ENCODE measurements at regions of chr17 and their contacts with region 1.

Region 1: GRCh38 chr17:75904749-75905521 is at the start of gene MRPL38:
- DNase-seq: peak; percentile 96
- ATAC-seq: peak; percentile 99
- H3K4me3 Mint-ChIP-seq: peak within 1 kb of the TSS; percentile 94
- H3K27ac Mint-ChIP-seq: peak within 1 kb of the TSS; percentile 90
- H3K4me1 Mint-ChIP-seq: peaks cover 25% of the 10 kb centered on the region
- H3K27me3 Mint-ChIP-seq: no peaks in the 10 kb centered on the region
- total RNA-seq, gene MRPL38: 89.0 to 113 TPM

Region 2: GRCh38 chr17:75864448-75864871 is 40.5 kb before region 1 on chr17:
- CTCF ChIA-PET with region 1: no interaction called
- POLR2A ChIA-PET with region 1: no interaction called
- DNase-seq: peak; percentile 74
- ATAC-seq: peak; percentile 88
- H3K4me3 Mint-ChIP-seq: peak overlapping the region; percentile 39
- H3K27ac Mint-ChIP-seq: peak overlapping the region; percentile 83
- H3K4me1 Mint-ChIP-seq: peaks cover 29% of the 10 kb centered on the region
- H3K27me3 Mint-ChIP-seq: no peaks in the 10 kb centered on the region

Region 3: DNA sequence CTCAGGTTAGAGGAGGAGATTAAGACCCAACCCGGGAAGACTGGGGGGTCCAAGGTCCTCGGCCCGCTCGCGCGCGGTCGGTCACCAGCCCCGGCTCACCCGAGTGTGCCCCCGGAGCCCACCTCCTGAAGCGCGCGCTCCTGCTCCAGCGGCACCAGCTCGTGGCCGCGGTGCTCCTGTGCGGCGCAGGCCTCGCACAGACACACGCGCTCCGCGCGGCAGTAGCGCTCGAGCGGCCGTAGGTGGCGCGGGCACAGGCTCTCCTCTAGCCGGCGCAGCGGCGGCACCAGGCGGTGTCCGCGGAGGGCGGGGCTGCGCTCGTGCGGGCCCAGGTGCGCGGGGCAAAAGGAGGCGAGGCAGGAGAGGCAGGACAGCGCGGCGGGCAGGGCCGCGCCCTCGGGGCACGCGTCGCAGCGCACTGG is 27.2 kb before region 1 on chr17:
- CTCF ChIA-PET with region 1: interaction called, 16 read pairs
- POLR2A ChIA-PET with region 1: interaction called, 5 read pairs
- DNase-seq: peak; percentile 82
- ATAC-seq: peak; percentile 77
- H3K4me3 Mint-ChIP-seq: peak overlapping the region; percentile 91
- H3K27ac Mint-ChIP-seq: peak overlapping the region; percentile 92
- H3K4me1 Mint-ChIP-seq: peaks cover 54% of the 10 kb centered on the region
- H3K27me3 Mint-ChIP-seq: peaks cover 8% of the 10 kb centered on the region

Region 4: DNA sequence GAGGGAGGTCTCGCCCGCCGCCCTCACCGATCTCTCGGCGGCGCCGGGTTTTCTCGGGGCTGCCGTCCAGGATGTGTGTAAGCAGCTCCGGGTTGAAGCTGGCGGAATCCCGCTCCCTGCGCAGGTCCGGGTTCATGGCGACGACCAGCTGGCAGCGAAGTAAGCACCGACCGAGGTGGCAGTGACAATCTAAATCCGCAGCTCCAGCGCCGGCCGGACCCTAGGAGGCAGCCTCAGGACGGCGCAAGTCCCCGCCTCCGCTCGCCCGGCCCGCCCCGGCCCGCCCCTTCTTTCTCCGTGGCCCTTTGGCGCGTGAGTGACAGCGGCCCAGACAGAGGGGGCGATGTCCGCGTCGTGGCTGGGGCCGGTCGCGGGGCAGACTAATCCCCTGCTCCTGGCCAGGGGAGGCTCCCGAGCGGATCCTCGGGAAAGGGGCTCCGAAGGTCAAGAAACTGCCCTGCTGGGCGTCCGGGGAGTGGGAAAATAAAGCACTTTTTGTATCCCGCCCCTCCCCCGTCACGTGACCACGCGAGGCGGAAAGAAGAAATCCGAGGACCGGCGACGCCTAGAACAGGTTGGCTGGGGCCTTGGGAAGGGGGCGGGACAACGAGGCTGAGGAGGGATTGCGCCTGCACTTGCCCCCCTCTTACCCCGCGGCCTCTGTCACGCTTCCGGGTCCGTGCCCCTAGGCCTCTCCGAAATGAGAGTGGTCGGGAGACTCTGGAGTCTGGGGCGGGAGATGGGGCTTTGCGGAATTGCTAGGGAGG is 74.2 kb after region 1 on chr17 and contains the starts of genes ACOX1 and TEN1:
- CTCF ChIA-PET with region 1: no interaction called
- POLR2A ChIA-PET with region 1: no interaction called
- DNase-seq: peak; percentile 99
- ATAC-seq: peak; percentile 97
- H3K4me3 Mint-ChIP-seq: peak within 1 kb of the TSS; percentile 99
- H3K27ac Mint-ChIP-seq: peak within 1 kb of the TSS; percentile 100
- H3K4me1 Mint-ChIP-seq: peaks cover 42% of the 10 kb centered on the region
- H3K27me3 Mint-ChIP-seq: no peaks in the 10 kb centered on the region
- total RNA-seq, gene ACOX1: 30.3 to 32.2 TPM
- total RNA-seq, gene TEN1: 16.8 to 21.0 TPM

Region 5: DNA sequence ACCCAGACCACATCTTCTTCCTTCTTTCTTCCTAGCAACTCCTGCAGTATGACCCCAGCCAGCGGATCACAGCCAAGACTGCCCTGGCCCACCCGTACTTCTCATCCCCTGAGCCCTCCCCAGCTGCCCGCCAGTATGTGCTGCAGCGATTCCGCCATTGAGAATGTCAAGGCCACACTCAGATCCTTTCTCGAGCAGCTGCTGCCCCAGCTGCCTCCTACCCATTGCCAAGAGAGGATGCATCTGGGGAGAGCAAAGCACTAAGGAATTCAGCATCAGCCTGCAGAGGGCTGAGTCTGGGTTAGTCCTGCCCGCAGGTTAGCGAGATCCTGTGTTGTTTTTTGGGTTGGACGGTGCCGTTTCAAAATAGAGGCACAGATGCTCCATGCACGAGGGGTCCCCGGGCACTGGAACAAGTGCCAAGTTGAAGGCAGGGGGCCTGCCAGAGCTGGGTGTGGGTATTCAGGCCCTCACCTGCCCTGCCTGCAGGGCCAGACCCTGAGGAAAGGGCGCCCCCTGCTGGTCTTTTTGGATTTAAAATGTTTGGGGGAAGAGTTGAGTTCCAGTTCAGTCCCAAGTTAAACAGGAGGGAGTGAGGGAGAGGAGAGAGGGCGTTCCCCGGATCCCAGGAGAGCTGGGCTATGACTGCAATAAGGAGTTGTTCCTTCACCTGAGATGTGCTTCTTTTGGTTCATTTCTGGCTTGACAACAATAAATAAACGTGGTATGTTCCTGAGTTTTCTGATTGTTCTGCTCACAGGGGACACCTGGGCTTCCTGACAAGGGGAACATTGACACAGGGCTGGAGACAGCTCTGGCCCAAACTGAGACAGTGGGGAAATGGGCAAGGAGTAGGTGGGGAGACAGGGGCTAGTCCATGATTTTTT is 100.6 kb after region 1 on chr17:
- CTCF ChIA-PET with region 1: interaction called, 69 read pairs
- POLR2A ChIA-PET with region 1: interaction called, 3 read pairs
- DNase-seq: peak; percentile 89
- ATAC-seq: peak; percentile 68
- H3K4me3 Mint-ChIP-seq: no peak overlapping the region
- H3K27ac Mint-ChIP-seq: peak overlapping the region; percentile 45
- H3K4me1 Mint-ChIP-seq: peaks cover 8% of the 10 kb centered on the region
- H3K27me3 Mint-ChIP-seq: no peaks in the 10 kb centered on the region

Measured in activated CD8-positive, alpha-beta T cell treated with anti-CD3 and anti-CD28 coated beads, Interleukin-2, amount 10 ng/mL, durations not matched to agents 7 days and 5 days (primary cell).